ENCODE measurements at regions of chr11 and their contacts with region 1.

Region 1: GRCh38 chr11:65169164-65169641 is 830 bp upstream of the SPDYC start:
- DNase-seq: peak; percentile 36 to 85 (median 60)
- ATAC-seq: peak; percentile 60
- H3K4me3 ChIP-seq: peak overlapping the region; percentile 37; the same call in 1 of the 2 replicates
- H3K27ac ChIP-seq: peak overlapping the region; percentile 87
- H3K4me1 ChIP-seq: peaks cover 36 to 49% of the 10 kb centered on the region in 2 experiments
- H3K27me3 ChIP-seq: no peaks in the 10 kb centered on the region; a peak in 1 of 5 replicates
- CTCF ChIP-seq: no peak
- EP300 ChIP-seq: peak; percentile 68; the same call in 1 of the 2 replicates
- POLR2A ChIP-seq: no peak
- RAD21 ChIP-seq: no peak

Region 2: GRCh38 chr11:64571410-64572091 is 597.7 kb before region 1 on chr11:
- CTCF ChIA-PET with region 1: no interaction called
- POLR2A ChIA-PET with region 1: no interaction called
- in situ Hi-C with region 1: no loop called
- intact Hi-C with region 1: no loop called
- DNase-seq: peak; percentile 61 to 76 (median 72)
- ATAC-seq: peak; percentile 92
- H3K4me3 ChIP-seq: no peak overlapping the region
- H3K27ac ChIP-seq: no peak overlapping the region
- H3K4me1 ChIP-seq: peaks cover 15 to 44% of the 10 kb centered on the region in 2 experiments
- H3K27me3 ChIP-seq: peaks cover 3 to 16% of the 10 kb centered on the region in 2 experiments
- CTCF ChIP-seq: no peak
- EP300 ChIP-seq: peak; percentile 30; the same call in 1 of the 2 replicates
- POLR2A ChIP-seq: no peak
- RAD21 ChIP-seq: peak in 1 of 2 experiments; percentile 9; a peak in 1 of 4 replicates

Region 3: GRCh38 chr11:65111744-65112414 is 57.3 kb before region 1 on chr11 and contains the start of gene TM7SF2:
- CTCF ChIA-PET with region 1: no interaction called
- POLR2A ChIA-PET with region 1: interaction called, 30 read pairs
- in situ Hi-C with region 1: no loop called
- intact Hi-C with region 1: no loop called
- DNase-seq: peak; percentile 96 to 99 (median 98)
- ATAC-seq: peak; percentile 90
- H3K4me3 ChIP-seq: peak within 1 kb of the TSS; percentile 44
- H3K27ac ChIP-seq: peak within 1 kb of the TSS; percentile 79
- H3K4me1 ChIP-seq: peaks cover 29 to 62% of the 10 kb centered on the region in 2 experiments
- H3K27me3 ChIP-seq: no peaks in the 10 kb centered on the region
- CTCF ChIP-seq: 0 out of 6 replicates have a peak, but pooled peaks of 1 of the 3 experiments have one; percentile 0
- EP300 ChIP-seq: no peak
- POLR2A ChIP-seq: peak; percentile 88
- RAD21 ChIP-seq: no peak
- polyA plus RNA-seq, gene TM7SF2: 1.2 to 1.4 TPM

Region 4: DNA sequence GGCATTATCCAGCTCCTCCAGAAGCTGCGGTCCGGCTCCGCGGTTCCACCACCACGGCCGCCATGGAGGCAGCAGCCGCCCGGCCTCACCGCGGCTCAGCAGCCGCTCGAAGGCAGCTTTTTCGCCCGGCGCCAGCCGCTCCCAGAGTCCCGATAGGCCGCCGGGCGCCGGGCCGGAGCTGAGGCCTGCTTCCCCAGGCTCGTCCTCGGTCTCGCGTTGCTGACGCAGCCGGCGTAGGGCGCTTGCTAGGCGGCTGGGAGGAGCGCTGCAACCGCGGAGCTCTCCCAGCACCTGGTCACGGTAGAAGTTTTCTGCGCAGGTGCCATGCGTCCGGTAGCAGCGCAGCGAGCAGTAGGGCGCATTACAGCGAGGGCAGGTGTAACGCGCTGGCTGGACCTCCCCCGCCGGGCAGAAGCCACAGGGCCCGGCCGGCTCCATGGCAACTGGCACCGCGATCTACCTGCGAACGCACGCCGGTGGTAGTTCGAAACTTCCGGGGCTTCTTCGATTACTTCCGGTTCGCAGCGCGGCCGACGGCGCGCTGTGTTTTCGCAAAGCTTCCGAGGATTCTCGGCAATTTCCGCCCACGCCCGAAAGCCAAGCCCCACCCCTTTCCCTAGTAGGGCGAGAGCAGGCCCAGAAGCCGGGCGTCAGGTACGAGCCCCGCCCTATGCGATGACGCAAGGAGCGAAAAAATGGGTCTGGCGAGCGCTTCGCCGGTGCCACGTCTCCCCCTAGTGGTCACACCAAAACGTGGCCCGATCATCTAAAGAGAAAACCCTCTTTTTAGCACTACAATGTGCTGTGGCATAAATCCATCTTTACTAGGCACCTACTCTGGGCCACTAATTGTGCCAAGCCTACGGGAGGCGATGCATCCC is 51.7 kb before region 1 on chr11 and contains the start of gene ZNHIT2:
- CTCF ChIA-PET with region 1: no interaction called
- POLR2A ChIA-PET with region 1: interaction called, 33 read pairs
- in situ Hi-C with region 1: no loop called
- intact Hi-C with region 1: no loop called
- DNase-seq: peak; percentile 84 to 99 (median 90)
- ATAC-seq: peak; percentile 78
- H3K4me3 ChIP-seq: peak within 1 kb of the TSS; percentile 95
- H3K27ac ChIP-seq: peak within 1 kb of the TSS; percentile 86
- H3K4me1 ChIP-seq: peaks cover 33 to 41% of the 10 kb centered on the region in 2 experiments
- H3K27me3 ChIP-seq: no peaks in the 10 kb centered on the region
- CTCF ChIP-seq: peak; percentile 85 to 97 (median 93)
- EP300 ChIP-seq: peak; percentile 18; the same call in 1 of the 2 replicates
- POLR2A ChIP-seq: peak; percentile 92
- RAD21 ChIP-seq: peak; percentile 84 to 85
- polyA plus RNA-seq, gene ZNHIT2: 0.08 to 0.20 TPM

Region 5: DNA sequence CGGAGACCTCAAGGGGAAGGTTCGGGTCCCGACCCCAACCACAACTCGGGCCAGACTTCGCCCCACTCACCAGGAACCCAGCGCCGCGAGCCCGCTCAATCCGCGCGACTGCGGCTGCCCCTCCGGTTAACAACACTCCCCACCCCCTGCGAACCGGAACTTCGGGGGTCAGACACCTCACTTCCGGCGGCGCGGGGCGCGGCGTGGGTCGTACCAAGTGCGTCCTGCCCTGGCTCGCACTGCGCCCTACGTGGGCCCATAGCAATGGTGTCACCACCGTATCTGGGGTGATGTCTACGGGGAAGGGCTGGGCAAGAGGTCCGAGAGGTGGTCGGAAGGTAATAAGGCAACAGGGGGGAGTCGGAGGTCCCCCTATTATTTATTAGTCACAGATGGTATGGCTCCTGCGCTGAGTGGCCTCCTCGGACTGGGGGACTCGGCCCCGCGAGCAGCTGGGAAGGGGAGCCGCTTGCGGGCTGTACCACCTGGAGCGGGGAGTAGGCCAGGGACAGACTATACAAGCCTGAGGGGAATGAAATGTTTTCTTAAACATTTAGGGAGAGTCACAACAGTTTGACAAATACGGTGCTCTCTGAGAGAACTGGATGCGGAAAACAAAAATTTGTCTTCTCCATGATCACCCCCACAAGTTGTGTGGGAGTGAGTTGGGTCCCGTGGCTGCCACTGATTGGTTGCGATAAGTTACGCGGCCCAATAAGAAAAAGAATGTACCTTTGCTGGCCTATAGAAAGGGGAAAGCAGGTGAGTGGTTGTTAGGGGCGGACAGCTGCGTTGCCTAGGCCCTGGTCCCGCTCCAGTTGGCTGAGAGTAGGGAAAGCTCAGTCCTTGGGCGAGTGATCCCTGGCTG is 34.6 kb before region 1 on chr11 and contains the start of gene SYVN1:
- CTCF ChIA-PET with region 1: no interaction called
- POLR2A ChIA-PET with region 1: interaction called, 52 read pairs
- in situ Hi-C with region 1: no loop called
- intact Hi-C with region 1: loop called (anchors 2 kb)
- DNase-seq: peak; percentile 91 to 98 (median 94)
- ATAC-seq: peak; percentile 93
- H3K4me3 ChIP-seq: peak within 1 kb of the TSS; percentile 96
- H3K27ac ChIP-seq: peak within 1 kb of the TSS; percentile 98
- H3K4me1 ChIP-seq: peaks cover 21 to 49% of the 10 kb centered on the region in 2 experiments; a peak in 4 of 5 replicates
- H3K27me3 ChIP-seq: no peaks in the 10 kb centered on the region; a peak in 1 of 5 replicates
- CTCF ChIP-seq: no peak
- EP300 ChIP-seq: peak; percentile 32; the same call in 1 of the 2 replicates
- POLR2A ChIP-seq: peak; percentile 90
- RAD21 ChIP-seq: peak; percentile 24; a peak in 2 of 4 replicates
- polyA plus RNA-seq, gene SYVN1: 0.41 to 0.63 TPM

Region 6: DNA sequence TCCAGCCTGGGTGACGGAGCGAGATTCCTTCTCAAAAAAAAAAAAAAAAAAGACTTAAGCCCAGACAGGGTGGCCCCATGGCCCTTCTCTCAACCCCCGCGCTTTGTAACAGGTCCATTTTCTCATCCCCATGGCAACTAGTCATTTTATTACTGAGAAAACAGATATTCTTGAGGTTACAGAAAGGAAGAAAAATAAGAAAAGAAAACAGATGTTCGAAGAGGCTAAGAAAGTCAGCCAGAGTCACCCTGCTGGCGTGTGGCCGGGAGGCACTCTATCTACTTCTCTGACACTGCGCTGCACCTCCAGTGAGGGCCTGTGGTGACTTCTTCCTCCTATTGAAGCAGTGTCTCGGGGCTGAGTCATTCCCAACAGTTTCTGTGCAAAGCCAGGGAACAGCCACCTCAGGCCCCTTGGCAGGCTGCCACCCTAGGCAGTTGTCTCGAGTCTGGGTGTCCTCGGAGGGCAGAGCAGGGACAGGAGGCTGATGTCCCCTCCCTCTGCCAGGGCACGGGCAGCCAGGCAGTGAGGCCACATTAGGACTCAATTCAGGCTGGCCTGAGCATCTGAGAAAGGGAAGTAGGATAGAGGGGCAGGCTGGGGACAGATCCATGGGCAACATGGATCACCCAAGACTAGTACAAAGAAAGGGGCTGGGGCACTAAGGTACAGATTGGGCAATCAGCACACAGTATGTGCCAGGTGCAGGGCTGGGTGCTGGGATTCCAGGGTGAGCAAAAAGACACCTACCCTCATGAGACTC is 18.5 kb before region 1 on chr11:
- CTCF ChIA-PET with region 1: no interaction called
- POLR2A ChIA-PET with region 1: interaction called, 25 read pairs
- in situ Hi-C with region 1: no loop called
- intact Hi-C with region 1: no loop called
- DNase-seq: peak; percentile 63 to 91 (median 76)
- ATAC-seq: peak; percentile 98
- H3K4me3 ChIP-seq: no peak overlapping the region
- H3K27ac ChIP-seq: peak overlapping the region; percentile 82
- H3K4me1 ChIP-seq: peaks cover 20 to 26% of the 10 kb centered on the region in 2 experiments
- H3K27me3 ChIP-seq: no peaks in the 10 kb centered on the region
- CTCF ChIP-seq: peak in 2 of 3 experiments; percentile 15 to 26; a peak in 1 of 6 replicates
- EP300 ChIP-seq: no peak
- POLR2A ChIP-seq: peak; percentile 56; the same call in 1 of the 2 replicates
- RAD21 ChIP-seq: no peak

Region 7: GRCh38 chr11:65159012-65159411 is 10.2 kb before region 1 on chr11:
- CTCF ChIA-PET with region 1: interaction called, 3 read pairs
- POLR2A ChIA-PET with region 1: interaction called, 39 read pairs
- in situ Hi-C with region 1: no loop called
- intact Hi-C with region 1: no loop called
- DNase-seq: no peak
- ATAC-seq: no peak
- H3K4me3 ChIP-seq: no peak overlapping the region
- H3K27ac ChIP-seq: no peak overlapping the region
- H3K4me1 ChIP-seq: peaks cover 0 to 2% of the 10 kb centered on the region in 2 experiments; a peak in 1 of 5 replicates
- H3K27me3 ChIP-seq: no peaks in the 10 kb centered on the region
- CTCF ChIP-seq: no peak
- EP300 ChIP-seq: no peak
- POLR2A ChIP-seq: no peak
- RAD21 ChIP-seq: no peak

Region 8: GRCh38 chr11:65180877-65181568 is 11.8 kb after region 1 on chr11:
- CTCF ChIA-PET with region 1: no interaction called
- POLR2A ChIA-PET with region 1: interaction called, 90 read pairs
- in situ Hi-C with region 1: no loop called
- intact Hi-C with region 1: no loop called
- DNase-seq: peak; percentile 73 to 84 (median 80)
- ATAC-seq: peak; percentile 86
- H3K4me3 ChIP-seq: peak overlapping the region; percentile 98
- H3K27ac ChIP-seq: peak overlapping the region; percentile 77
- H3K4me1 ChIP-seq: peaks cover 11 to 44% of the 10 kb centered on the region in 2 experiments
- H3K27me3 ChIP-seq: no peaks in the 10 kb centered on the region
- CTCF ChIP-seq: peak; percentile 68 to 77 (median 70)
- EP300 ChIP-seq: no peak
- POLR2A ChIP-seq: no peak
- RAD21 ChIP-seq: peak; percentile 64 to 73

Measured in K562 (cell line).